Calu3 (cell line): ENCODE measurements at regions of chr2 and their contacts with region 1.

Region 1: DNA sequence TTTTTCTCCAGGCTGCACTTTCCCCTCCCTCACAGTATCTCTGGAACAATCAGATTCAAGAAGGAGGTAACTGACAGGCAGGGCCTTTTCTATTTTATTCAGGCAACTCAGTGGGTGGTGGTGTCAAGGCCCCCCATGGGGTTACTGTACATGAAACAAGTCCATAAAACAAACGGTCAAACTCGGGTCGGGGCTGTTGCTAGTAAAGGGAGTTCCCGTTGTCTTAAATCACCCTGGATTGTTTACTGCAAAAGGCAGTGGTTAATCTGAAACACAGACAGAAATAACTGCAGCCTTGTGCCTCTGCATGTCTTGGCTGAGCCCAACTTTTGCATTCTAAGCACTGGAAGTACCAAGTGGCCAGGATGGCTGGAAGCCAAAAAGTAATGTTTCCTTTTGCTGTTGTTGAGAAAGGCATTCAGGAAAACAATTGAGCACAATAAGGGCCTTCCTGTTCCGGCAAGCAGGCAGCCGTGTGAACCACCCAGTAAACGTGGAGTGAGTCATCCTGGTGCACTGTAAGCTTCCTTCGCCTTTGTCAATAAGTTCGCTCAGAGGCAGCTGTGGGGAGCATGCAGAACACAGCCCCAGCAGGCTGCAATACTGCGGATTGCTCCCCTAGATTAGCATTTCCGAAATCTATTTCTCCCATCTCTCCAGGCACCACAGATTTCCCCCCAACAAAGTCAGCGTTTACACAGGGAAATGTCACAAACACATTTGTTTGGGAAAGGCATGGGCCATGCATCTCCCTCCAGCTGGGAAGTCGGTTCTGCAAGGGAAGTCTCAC is 149.6 kb downstream of the IRS1 start:
- DNase-seq: peak; percentile 87
- H3K4me3 Mint-ChIP-seq: peak overlapping the region; percentile 60
- H3K27ac Mint-ChIP-seq: peak overlapping the region; percentile 86
- H3K4me1 Mint-ChIP-seq: peaks cover 57% of the 10 kb centered on the region
- H3K27me3 Mint-ChIP-seq: no peaks in the 10 kb centered on the region
- CTCF ChIP-seq: no peak

Region 2: DNA sequence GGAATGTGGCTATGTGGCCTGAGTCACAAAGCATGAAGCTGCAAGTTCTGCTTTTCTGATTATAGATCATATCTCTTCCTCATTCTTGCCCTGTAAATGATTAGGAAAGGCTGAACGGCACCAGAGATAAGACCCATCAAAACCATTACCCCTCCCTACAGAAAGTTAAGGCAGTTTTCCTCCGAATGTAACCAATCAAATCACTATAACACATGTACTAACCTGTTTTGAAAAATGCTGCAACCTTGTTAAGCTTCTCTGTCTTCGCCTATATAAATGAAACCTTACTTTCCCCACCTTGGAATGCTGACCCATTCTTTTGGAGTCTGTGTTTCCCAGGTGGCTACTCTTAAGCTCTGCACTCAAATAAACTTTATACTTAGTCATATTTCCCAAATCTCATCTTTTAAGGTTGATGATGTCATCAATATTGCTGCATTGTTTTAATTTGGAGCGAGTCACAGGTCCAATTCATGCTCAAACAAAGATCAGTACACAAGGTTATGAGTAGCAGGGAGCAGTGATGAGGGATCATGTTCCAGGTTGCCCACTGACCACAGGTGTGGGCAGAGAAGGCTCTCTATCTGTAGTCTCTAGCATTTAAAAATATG is 512.8 kb before region 1 on chr2:
- CTCF ChIA-PET with region 1: no interaction called
- intact Hi-C with region 1: loop called (anchors 5 kb)
- DNase-seq: peak; percentile 30
- H3K4me3 Mint-ChIP-seq: peak overlapping the region; percentile 45
- H3K27ac Mint-ChIP-seq: peak overlapping the region; percentile 17
- H3K4me1 Mint-ChIP-seq: peaks cover 32% of the 10 kb centered on the region
- H3K27me3 Mint-ChIP-seq: no peaks in the 10 kb centered on the region
- CTCF ChIP-seq: no peak

Region 3: DNA sequence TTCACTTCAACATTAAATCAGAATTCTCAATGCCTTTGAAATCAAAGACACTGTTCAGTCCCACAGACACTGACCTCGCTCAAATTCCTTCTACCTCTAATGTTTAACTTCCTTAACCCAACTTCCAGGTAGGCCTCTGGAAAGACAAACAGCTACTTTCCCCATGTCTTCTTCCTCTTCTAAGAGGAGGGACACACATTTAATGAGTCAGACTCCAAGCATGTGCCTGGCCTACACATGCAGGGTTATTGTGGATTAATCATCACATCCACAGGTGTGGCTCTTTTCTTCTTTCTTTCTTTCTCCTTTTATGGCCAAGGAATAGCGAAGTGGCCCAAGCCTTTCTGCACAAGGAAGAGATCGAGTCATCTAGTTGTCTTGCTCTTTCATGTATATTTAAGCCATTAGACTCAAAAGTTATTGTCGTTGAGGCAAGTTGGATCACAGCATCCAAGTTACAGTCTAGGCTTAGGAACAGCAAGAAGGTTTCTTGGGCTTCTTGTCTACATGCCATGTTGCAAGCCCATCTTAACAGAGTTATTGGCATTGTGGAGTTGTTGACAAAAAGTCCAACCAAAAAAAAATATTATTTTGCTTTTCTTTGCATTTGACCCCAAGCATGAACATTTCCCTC is 238.2 kb before region 1 on chr2:
- CTCF ChIA-PET with region 1: no interaction called
- intact Hi-C with region 1: loop called (anchors 5 kb)
- DNase-seq: peak; percentile 73
- H3K4me3 Mint-ChIP-seq: peak overlapping the region; percentile 17
- H3K27ac Mint-ChIP-seq: peak overlapping the region; percentile 95
- H3K4me1 Mint-ChIP-seq: peaks cover 37% of the 10 kb centered on the region
- H3K27me3 Mint-ChIP-seq: no peaks in the 10 kb centered on the region
- CTCF ChIP-seq: no peak

Region 4: DNA sequence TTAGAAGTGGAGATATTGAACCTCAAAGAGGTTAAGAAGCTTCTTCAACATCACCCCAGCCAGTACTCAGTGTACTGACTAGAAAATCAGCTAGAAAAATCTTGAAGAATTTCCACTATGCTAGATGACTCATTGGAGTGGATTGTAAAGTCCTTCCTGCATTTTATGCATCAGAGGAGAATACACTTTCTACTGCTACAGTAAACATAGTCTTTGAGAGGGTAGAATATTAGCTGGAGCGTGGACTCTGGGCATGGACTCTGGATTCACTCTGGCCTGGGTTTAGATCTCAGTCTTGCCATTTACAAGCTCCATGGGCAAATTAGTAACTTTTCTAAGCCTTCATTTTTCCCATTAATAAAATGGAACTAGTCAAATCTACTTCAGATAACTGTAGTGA is 66.4 kb before region 1 on chr2:
- CTCF ChIA-PET with region 1: interaction called, 5 read pairs
- intact Hi-C with region 1: loop called (anchors 5 kb)
- DNase-seq: no peak
- H3K4me3 Mint-ChIP-seq: peak overlapping the region; percentile 19
- H3K27ac Mint-ChIP-seq: peak overlapping the region; percentile 73
- H3K4me1 Mint-ChIP-seq: peaks cover 57% of the 10 kb centered on the region
- H3K27me3 Mint-ChIP-seq: no peaks in the 10 kb centered on the region
- CTCF ChIP-seq: no peak

Region 5: GRCh38 chr2:226673314-226673723 is 23.3 kb after region 1 on chr2:
- CTCF ChIA-PET with region 1: interaction called, 4 read pairs
- intact Hi-C with region 1: loop called (anchors 1 kb)
- DNase-seq: peak; percentile 79
- H3K4me3 Mint-ChIP-seq: peak overlapping the region; percentile 8
- H3K27ac Mint-ChIP-seq: peak overlapping the region; percentile 73
- H3K4me1 Mint-ChIP-seq: peaks cover 40% of the 10 kb centered on the region
- H3K27me3 Mint-ChIP-seq: no peaks in the 10 kb centered on the region
- CTCF ChIP-seq: no peak

Region 6: DNA sequence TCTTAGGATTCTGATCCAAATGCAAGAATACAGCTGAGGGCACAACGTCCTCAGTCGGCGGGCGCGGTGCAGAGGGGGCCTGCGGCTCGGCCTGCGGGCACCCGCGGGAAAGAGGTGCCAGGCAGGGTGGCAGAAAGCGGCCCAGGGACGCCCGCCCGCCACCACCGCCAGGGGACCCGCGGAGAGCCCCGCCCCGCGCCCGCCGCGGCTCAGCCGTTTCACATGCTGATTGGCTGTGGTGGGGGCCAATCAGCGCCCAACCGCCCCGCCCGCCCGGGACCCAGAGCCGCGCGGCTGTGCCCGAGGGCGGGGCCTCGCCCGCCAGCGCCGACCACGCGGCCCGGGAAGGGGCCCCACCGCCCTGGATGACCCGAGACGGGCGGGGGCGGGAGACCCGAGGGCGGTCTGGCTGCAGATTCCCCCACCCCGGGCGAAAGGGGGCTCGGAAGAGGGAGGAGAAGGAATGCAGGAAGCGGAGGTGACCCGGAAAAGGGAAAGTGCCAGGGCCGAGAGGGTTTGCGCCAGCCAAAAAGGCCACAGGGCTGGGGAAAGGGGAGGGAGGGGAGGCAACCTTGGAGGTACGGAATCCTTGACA is 141.5 kb after region 1 on chr2:
- CTCF ChIA-PET with region 1: no interaction called
- intact Hi-C with region 1: loop called (anchors 2 kb)
- DNase-seq: peak; percentile 97
- H3K4me3 Mint-ChIP-seq: peak overlapping the region; percentile 87
- H3K27ac Mint-ChIP-seq: peak overlapping the region; percentile 92
- H3K4me1 Mint-ChIP-seq: peaks cover 58% of the 10 kb centered on the region
- H3K27me3 Mint-ChIP-seq: no peaks in the 10 kb centered on the region
- CTCF ChIP-seq: peak; percentile 67